Common myeloid progenitor, CD34-positive (primary cell): ENCODE measurements at regions of chr17 and their contacts with region 1.

Region 1: DNA sequence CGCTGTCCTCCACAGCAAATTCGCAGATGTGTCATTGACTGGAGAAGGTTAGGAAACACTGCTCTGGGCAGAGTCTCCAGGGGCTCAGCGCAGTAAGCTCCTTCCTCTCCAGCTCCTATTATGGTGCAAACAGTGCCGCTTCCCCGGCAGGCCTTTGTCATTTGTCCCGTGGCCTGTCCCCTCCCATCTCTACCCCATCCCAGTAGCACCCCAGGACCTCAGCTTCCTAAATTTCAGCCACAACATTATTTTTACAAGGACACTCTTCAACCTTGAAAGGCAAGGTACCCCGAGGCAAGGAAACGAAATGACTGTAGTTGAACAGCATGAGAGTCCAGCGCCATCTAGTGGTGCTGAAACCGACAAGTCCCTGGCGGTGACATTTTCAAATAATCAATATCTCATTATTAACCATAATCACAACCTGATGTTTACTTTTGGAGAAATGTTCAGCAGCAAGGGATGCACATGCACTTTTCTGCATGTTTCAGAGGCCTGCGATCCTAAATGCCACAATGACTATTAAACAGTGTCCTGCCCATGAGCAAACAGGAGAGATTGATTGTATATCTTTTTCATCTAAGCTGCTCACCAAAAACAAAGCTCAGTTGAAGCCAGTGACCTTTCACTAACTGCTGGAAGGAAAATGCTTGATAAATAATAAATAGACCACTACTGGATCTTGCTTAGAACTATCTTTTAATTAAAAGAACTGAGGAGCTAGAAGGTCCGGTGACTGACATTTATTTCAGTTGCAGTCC is 16.5 kb downstream of the MRPS23 start:
- DNase-seq: peak; percentile 70 to 79 (median 78)
- H3K4me3 ChIP-seq: peak overlapping the region; percentile 15 to 74 (median 62)
- H3K27ac ChIP-seq: no peak overlapping the region
- H3K4me1 ChIP-seq: peaks cover 5 to 14% (median 10%) of the 10 kb centered on the region in 4 experiments
- H3K27me3 ChIP-seq: no peaks in the 10 kb centered on the region

Region 2: GRCh38 chr17:57121338-57122042 is 711.9 kb before region 1 on chr17:
- CTCF ChIA-PET with region 1: interaction called, 17 read pairs
- POLR2A ChIA-PET with region 1: no interaction called
- DNase-seq: peak; percentile 33 to 63 (median 56)
- H3K4me3 ChIP-seq: no peak overlapping the region
- H3K27ac ChIP-seq: no peak overlapping the region
- H3K4me1 ChIP-seq: no peaks in the 10 kb centered on the region
- H3K27me3 ChIP-seq: no peaks in the 10 kb centered on the region

Region 3: DNA sequence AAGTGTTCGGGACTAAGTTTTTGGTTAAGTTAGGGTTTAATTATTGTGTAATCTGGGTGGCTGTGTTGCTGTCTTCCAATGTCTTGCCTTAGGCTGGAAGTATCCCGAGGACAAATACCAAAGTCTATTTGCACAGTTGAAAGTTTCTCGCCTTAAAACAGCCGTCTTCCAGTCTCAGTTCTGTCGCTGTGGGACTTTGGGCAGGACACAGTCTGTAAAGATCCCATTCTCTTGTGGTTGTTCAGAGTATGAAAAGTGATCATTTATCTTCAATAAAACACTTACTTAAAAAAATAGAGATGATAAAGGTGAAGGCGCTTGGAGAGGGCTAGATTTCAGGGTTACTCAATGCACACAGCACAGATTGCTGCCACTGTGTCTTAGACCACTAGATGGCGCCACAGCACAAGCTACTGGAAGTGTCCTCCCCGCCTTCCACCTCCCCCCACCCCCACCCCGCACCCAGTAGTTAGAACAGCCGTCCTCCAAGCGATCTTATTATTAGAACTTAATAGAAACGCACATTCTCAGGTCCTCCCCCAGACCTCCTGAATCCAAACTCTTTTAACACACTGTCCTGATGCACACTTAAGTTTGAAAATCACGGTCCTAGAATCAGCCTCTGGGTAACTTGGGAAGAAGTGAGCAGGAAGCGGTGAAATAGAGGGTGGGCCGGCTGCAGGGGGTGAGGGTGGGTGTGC is 702.4 kb before region 1 on chr17:
- CTCF ChIA-PET with region 1: interaction called, 17 read pairs
- POLR2A ChIA-PET with region 1: no interaction called
- DNase-seq: peak; percentile 74 to 86 (median 80)
- H3K4me3 ChIP-seq: peak overlapping the region in 1 of 7 experiments; percentile 61
- H3K27ac ChIP-seq: no peak overlapping the region
- H3K4me1 ChIP-seq: peaks cover 0 to 9% (median 5%) of the 10 kb centered on the region in 4 experiments
- H3K27me3 ChIP-seq: no peaks in the 10 kb centered on the region

Region 4: DNA sequence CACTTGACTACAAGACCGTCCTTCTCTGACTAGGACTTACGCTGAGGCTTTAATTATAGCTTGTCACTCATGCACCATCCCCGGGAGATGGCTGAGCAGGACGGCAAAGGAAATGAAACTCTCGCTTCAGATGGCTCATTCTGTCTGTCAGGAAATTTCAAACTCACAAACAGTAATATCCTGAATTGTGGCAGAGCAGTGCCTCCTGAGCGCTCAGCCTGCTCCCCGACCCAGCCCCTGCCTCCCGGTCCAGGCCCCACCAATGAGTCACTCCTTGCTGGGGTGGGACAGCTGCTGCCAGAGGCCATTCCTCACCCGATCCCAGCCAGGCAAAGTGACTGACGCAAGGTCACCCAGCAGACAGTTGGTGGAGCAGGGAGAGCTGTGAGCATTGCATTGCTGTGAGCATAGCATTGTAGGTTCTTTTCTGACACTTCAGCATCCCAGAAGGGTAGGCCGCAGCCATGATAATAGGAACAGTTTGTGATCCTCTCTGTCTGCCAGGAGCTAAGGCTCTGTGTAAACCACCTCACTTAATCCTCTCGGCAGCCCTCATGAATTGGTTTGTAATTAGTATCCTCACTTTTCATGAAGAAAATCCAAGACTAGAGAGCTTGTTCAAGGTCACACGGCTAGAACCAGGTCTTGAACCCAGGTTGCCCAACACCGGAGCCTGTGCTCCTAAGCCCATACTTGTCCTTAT is 109.2 kb before region 1 on chr17:
- CTCF ChIA-PET with region 1: no interaction called
- POLR2A ChIA-PET with region 1: no interaction called
- DNase-seq: no peak
- H3K4me3 ChIP-seq: no peak overlapping the region
- H3K27ac ChIP-seq: no peak overlapping the region
- H3K4me1 ChIP-seq: peaks cover 0 to 14% (median 1%) of the 10 kb centered on the region in 4 experiments
- H3K27me3 ChIP-seq: peaks cover 0 to 2% (median 0%) of the 10 kb centered on the region in 5 experiments

Region 5: GRCh38 chr17:57739402-57740392 is 93.7 kb before region 1 on chr17:
- CTCF ChIA-PET with region 1: interaction called, 10 read pairs
- POLR2A ChIA-PET with region 1: no interaction called
- DNase-seq: peak; percentile 31 to 40 (median 33)
- H3K4me3 ChIP-seq: no peak overlapping the region
- H3K27ac ChIP-seq: no peak overlapping the region
- H3K4me1 ChIP-seq: peaks cover 0 to 2% (median 0%) of the 10 kb centered on the region in 4 experiments
- H3K27me3 ChIP-seq: no peaks in the 10 kb centered on the region

Region 6: GRCh38 chr17:57810721-57811637 is 22.4 kb before region 1 on chr17:
- CTCF ChIA-PET with region 1: interaction called, 49 read pairs
- POLR2A ChIA-PET with region 1: interaction called, 4 read pairs
- DNase-seq: peak; percentile 80 to 94 (median 90)
- H3K4me3 ChIP-seq: peak overlapping the region in 5 of 7 experiments; percentile 19 to 59 (median 43)
- H3K27ac ChIP-seq: peak overlapping the region in 1 of 2 experiments; percentile 6
- H3K4me1 ChIP-seq: peaks cover 0 to 31% (median 18%) of the 10 kb centered on the region in 4 experiments
- H3K27me3 ChIP-seq: peaks cover 0 to 11% (median 2%) of the 10 kb centered on the region in 5 experiments

Region 7: DNA sequence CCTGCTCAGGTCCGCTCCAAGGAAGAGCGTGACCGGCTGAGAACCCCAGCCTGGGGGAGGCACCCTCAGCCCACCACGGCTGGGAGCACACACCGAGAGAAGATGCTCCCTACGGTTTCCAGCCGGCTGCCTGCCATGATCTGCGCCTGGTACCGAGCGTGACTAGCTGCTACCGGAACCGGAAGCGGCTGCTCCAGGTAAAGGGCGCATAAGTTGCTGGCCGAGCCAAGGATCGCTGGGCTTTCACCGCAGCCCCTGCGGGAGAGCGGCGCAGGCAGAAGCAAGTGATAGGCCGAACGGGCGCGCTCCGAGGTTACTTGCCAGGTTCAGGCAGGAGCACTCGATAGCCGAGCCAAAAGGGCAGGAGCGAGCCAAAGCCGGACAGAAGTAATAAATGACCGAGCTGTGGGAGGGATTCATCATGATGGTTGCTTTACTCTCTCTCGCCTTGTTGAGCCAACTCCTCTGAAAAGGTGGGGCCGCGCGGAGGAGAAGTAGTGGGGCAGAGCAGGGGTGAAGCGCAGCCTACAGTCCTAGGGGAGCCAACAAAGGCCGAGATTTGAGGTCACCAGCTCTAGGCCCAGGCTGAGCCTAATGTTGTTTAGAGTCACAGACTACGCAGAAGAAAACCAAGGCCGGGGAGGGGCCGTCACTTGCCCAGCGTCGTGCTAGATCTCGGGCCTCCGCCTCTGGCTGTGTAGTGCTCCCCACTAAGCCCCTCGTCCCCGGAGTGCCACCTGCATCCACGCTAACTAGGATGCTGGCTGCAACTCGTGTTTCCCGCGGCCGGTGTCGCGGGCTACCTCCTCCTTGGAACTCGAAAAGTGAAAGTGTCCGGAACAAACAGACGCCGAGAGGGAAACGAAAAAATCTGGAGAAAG is 16.8 kb after region 1 on chr17 and contains the start of gene MRPS23:
- CTCF ChIA-PET with region 1: interaction called, 24 read pairs
- POLR2A ChIA-PET with region 1: no interaction called
- DNase-seq: peak; percentile 99 to 100 (median 99)
- H3K4me3 ChIP-seq: peak within 1 kb of the TSS; percentile 47 to 96 (median 87)
- H3K27ac ChIP-seq: peak within 1 kb of the TSS; percentile 80 to 92
- H3K4me1 ChIP-seq: peaks cover 14 to 50% (median 36%) of the 10 kb centered on the region in 4 experiments
- H3K27me3 ChIP-seq: no peaks in the 10 kb centered on the region

Region 8: GRCh38 chr17:57892146-57892828 is 58.9 kb after region 1 on chr17:
- CTCF ChIA-PET with region 1: no interaction called
- POLR2A ChIA-PET with region 1: no interaction called
- DNase-seq: peak; percentile 72 to 83 (median 77)
- H3K4me3 ChIP-seq: peak overlapping the region in 2 of 7 experiments; percentile 31 to 52
- H3K27ac ChIP-seq: peak overlapping the region in 1 of 2 experiments; percentile 69
- H3K4me1 ChIP-seq: peaks cover 0 to 54% (median 43%) of the 10 kb centered on the region in 4 experiments
- H3K27me3 ChIP-seq: no peaks in the 10 kb centered on the region

Region 9: DNA sequence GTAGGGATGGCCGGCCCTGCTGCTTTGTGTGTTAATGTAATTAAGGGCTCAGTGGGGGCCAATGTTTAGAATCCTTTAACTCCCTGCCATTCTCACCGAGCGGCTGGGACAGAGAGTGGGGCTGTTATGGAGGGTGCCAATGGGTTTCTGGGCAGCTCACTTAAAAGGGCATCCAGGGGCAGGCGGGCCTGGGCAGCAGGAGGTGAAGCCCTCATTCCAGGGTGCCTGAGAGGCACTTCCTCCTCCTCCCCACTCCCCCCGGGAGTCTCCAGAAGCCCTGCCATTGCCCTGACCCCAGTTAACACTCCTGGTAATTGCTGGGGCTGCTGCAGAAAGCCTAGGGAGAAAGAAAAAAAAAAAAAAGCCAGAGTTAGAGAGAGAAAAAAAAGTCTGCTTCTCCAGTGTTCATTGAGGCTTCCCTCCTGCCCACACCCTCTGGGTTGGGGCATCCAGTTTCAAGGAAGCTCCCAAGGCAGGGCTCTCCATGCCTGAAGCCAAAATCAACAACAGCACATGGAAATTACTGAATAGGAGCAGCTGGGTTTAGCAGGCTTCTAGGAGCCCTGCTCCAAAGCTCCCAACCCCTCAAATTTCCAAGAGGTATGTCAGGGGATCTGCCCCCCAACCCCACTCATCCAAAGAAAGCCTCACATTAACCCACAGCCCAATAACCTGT is 93.8 kb after region 1 on chr17:
- CTCF ChIA-PET with region 1: no interaction called
- POLR2A ChIA-PET with region 1: no interaction called
- DNase-seq: no peak
- H3K4me3 ChIP-seq: no peak overlapping the region
- H3K27ac ChIP-seq: no peak overlapping the region
- H3K4me1 ChIP-seq: peaks cover 0 to 3% (median 0%) of the 10 kb centered on the region in 4 experiments
- H3K27me3 ChIP-seq: peaks cover 0 to 2% (median 0%) of the 10 kb centered on the region in 5 experiments